AG04449 (cell line): ENCODE measurements at regions of chr2 and their contacts with region 1.

Region 1: DNA sequence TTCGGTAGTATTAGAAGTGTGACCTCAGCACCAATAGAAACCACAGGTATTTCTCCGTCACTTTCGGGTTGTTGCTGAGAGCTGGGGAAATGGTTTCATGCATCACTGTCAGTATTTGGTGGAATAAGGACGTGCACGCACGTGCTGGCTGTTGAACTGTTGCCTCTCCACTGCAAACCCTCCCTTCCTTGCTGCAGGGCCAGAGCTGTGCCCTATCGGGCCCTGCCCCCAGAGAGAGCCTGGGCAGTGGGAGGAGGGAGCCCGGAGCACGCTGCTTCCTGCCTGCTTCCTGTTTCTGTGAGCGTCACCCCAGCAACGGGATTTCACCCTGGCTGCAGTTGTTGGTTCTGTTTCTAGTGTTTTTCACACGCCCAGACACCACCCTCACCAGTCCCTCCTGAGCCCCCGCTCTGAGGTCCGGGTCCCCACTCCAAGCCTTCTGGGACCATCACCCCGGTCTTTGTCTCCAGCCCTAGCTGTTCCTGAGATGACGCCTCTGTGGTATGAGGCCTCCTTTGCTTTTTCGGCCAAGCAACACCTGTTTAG is 47.4 kb downstream of the LRRFIP1 start:
- DNase-seq: no peak
- H3K4me3 ChIP-seq: peak overlapping the region; percentile 29
- CTCF ChIP-seq: no peak

Region 2: DNA sequence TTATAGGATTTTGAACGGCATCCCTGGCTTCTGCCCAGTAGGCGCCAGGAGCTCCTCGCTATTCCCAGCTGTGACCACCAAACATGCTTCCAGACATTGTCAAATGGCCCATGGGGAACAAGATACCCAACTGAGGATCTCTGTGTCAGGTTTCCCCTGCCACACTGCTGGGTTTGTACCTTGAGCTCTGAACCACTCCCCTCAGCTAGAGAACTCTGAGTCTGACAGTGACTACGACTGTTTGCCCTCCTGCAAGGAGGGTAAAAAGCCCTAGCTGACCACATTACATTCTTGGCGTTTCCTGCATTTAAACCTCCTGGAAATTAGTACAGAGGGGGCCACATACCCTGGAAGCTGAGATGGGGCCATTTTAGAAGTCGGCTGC is 35.0 kb before region 1 on chr2:
- CTCF ChIA-PET with region 1: no interaction called
- POLR2A ChIA-PET with region 1: no interaction called
- DNase-seq: no peak
- H3K4me3 ChIP-seq: no peak overlapping the region
- CTCF ChIP-seq: no peak

Region 3: DNA sequence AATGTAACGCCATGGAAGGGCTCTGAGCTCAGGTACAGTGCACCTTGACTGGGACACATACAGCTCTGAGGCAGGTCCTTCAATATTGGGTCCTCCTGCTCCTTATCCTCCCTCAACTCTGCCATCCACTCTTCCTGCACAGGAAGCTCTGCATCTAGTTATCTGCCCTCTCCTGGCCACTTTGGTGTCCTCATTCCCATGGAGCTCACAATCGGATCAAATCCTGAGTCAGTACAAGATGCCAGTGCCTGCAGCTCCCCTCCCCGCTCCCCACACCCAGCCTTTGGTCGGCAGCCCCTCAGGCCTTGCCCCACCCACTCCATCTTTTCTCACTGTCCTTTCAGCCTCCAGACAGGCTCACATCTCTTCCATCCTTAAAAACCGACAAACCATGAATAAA is 10.6 kb after region 1 on chr2:
- CTCF ChIA-PET with region 1: interaction called, 87 read pairs
- POLR2A ChIA-PET with region 1: interaction called, 40 read pairs
- DNase-seq: no peak
- H3K4me3 ChIP-seq: no peak overlapping the region
- CTCF ChIP-seq: peak; percentile 46

Region 4: DNA sequence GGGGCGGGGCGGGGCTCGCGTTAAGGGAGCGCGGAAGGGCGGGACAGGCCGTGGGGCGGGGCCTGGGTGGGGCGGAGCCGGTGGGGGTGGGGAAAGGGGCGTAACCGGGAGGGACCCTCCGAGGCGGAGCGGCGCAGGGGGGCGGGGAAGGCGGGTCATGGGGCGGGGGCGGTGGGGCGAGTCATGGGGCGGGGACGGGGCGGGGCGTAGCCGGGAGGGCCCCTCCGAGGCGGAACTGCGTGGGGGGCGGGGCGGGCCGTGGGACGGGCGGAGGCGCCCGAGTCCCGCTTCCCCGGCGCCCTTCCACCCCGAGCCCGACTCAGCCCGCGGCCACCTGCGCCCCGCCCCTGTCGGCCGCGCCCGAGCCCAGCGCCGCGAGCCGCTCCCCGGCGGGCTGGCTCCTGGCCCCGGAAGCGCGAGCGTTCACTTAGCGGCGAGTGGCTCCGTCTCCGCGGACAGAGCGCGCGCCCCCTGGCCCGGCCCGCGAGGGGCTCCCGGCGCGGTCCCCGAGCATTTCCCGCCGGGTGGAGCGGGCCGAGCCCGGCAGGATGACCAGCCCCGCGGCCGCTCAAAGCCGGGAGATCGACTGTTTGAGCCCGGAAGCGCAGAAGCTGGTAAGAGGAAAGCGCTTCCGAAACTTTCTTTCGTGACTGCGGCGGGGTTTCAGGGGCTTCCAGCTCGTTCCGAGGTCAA is 17.2 kb after region 1 on chr2:
- CTCF ChIA-PET with region 1: interaction called, 87 read pairs
- POLR2A ChIA-PET with region 1: interaction called, 40 read pairs
- DNase-seq: no peak
- H3K4me3 ChIP-seq: peak overlapping the region; percentile 78
- CTCF ChIP-seq: no peak

Region 5: DNA sequence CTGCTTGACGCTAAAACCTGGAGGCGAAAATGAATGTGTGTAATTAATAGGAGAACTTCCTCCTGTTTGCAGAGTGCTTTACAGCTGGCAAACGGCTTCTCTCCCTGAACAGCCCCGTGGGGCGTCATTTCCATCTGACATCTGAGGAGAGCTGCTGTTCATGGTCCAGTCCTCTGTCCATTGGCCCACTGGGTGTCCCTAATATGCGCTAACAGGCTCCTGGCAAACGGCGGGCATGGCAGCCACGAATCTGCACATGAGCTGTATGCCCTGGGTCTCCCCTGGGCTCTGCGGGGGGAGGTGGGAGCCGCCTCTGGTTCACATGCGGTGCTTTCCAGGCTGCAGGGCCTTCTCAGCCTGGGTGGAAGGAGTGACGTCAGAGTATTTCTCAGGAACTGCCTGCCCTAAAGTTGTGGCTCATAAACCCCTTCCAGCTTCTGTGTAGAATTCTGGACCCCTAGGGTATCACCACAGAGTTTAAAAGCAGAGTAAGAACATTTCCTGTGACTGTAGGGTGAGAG is 25.8 kb after region 1 on chr2:
- CTCF ChIA-PET with region 1: interaction called, 10 read pairs
- POLR2A ChIA-PET with region 1: interaction called, 4 read pairs
- DNase-seq: no peak
- H3K4me3 ChIP-seq: no peak overlapping the region
- CTCF ChIP-seq: no peak

Region 6: GRCh38 chr2:237774802-237775553 is 100.2 kb after region 1 on chr2:
- CTCF ChIA-PET with region 1: interaction called, 14 read pairs
- POLR2A ChIA-PET with region 1: interaction called, 3 read pairs
- DNase-seq: no peak
- H3K4me3 ChIP-seq: no peak overlapping the region
- CTCF ChIP-seq: peak; percentile 58